A549 (cell line): ENCODE measurements at regions of chr15 and their contacts with region 1.

Region 1: GRCh38 chr15:69058830-69059556 is 44.5 kb downstream of the NOX5 start:
- DNase-seq: peak; percentile 92 to 99
- ATAC-seq: peak; percentile 79 to 92
- H3K4me3 ChIP-seq: no peak overlapping the region
- H3K27ac ChIP-seq: peak overlapping the region; percentile 27 to 63; a peak in 5 of 6 replicates
- H3K4me1 ChIP-seq: peaks cover 26% of the 10 kb centered on the region
- CTCF ChIP-seq: peak; percentile 99
- EP300 ChIP-seq: no peak
- POLR2A ChIP-seq: no peak
- RAD21 ChIP-seq: peak; percentile 99

Region 2: DNA sequence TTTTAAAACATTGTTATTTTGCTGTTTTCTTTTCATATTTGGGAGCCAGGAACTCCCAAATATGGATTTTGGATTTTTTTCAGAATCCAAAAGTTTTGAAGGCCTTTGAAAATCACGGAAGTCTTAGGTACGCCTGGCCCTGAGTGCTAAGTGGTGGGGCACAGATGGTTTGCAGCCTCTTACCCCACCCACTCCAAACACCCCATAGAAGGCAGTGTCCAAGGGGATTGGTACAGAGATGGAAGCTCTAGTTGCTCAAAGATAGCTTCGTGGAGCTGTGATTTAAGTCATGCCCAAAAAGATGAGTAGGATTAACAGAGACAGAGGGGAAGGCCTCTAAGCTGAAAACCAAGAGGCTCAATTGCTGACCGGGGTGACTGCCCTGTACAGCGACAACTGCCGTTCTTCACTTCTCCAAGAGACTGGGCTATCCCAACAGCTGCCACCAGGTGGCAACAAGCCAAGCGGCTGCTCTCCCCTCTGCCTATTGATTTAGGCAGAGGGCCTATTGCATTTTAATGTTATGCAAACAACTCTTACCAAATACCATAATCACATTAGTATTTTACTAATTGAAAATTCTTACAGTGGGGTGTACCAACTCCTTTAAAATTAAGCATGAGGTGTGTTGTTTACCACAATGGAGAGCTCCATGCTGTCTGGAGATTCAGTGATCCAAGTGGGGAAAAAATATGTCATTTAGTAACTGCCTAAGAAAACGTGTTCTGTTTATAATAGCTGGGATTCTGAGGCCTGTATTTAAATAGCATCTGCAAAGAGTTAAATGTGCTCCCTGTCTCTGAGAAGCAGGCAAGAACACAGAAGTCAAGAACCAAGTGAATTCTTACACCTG is 1602.1 kb before region 1 on chr15:
- CTCF ChIA-PET with region 1: no interaction called
- POLR2A ChIA-PET with region 1: no interaction called
- DNase-seq: peak; percentile 75 to 81
- ATAC-seq: peak; percentile 96 to 99
- H3K4me3 ChIP-seq: no peak overlapping the region
- H3K27ac ChIP-seq: no peak overlapping the region
- H3K4me1 ChIP-seq: no peaks in the 10 kb centered on the region
- CTCF ChIP-seq: peak; percentile 94
- EP300 ChIP-seq: no peak
- POLR2A ChIP-seq: no peak
- RAD21 ChIP-seq: peak; percentile 76 to 81

Region 3: GRCh38 chr15:68894208-68894607 is 164.8 kb before region 1 on chr15:
- CTCF ChIA-PET with region 1: no interaction called
- POLR2A ChIA-PET with region 1: no interaction called
- DNase-seq: no peak
- ATAC-seq: 0 out of 6 replicates have a peak, but pooled peaks of 1 of the 2 experiments have one; percentile 30
- H3K4me3 ChIP-seq: no peak overlapping the region
- H3K27ac ChIP-seq: no peak overlapping the region
- H3K4me1 ChIP-seq: no peaks in the 10 kb centered on the region
- CTCF ChIP-seq: no peak
- EP300 ChIP-seq: no peak
- POLR2A ChIP-seq: no peak
- RAD21 ChIP-seq: no peak

Region 4: DNA sequence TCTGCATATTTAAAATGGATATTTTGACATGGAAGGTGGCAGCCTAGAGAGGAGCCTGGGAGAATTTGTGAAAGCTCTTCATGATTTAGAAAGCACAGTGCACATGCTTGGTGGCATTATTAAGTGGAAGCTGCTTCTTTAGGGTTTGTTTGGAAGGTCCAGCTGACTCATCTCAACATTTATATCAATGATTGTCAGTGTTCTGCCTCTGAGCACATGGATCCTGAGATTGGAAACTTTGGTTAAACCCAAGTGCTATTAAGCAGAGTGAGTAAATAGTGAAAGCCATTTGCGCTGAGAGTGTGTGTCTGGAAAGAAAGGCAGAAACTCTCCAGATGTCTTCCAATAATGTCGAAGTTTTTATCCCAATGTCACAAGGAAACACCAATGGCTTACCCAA is 37.1 kb before region 1 on chr15:
- CTCF ChIA-PET with region 1: no interaction called
- POLR2A ChIA-PET with region 1: no interaction called
- DNase-seq: no peak
- ATAC-seq: no peak
- H3K4me3 ChIP-seq: no peak overlapping the region
- H3K27ac ChIP-seq: no peak overlapping the region
- H3K4me1 ChIP-seq: peaks cover 5% of the 10 kb centered on the region; the same call in 1 of the 3 replicates
- CTCF ChIP-seq: no peak
- EP300 ChIP-seq: no peak
- POLR2A ChIP-seq: no peak
- RAD21 ChIP-seq: no peak

Region 5: DNA sequence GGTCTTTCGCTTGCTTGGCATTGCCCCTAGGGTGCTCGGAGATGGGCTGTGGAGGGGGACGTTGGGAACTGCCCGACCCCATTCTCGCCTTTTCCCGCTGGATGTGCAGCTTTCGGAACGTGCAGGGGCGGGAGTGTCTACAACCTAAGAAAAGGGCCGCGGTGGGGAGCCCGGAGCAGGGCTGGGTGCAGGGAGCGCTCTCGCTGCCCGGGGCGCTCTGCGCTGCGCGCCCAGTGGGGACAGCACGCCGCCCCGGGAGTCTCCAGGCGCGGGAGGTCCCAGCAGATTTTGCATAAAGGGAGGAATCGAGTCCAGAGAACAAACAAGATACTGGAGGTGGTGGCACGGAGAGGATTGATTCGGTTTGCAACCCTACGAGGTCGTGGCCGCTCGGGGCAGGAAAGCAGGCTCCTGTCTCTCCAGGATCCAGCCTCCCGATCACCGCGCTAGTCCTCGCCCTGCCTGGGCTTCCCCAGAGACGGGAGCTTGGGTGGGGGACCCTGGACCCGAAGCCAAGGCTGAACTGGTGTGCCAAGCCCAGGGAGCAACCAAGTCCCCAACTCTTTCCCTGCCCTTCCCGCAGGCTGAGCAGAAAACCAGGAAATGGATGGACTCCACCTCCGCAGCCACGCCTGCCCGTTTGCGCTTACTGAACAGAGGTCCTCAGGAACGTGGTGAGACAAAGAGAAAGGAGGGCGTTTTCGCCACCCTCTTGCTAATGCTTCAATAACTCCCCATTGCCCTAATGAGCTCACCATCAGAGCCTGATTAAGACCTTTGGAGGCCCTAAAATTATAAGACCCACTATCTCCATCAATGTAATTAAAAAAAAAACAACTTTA is 15.2 kb after region 1 on chr15:
- CTCF ChIA-PET with region 1: interaction called, 96 read pairs
- POLR2A ChIA-PET with region 1: no interaction called
- DNase-seq: peak; percentile 86
- ATAC-seq: peak; percentile 93 to 96
- H3K4me3 ChIP-seq: peak overlapping the region; percentile 57
- H3K27ac ChIP-seq: peak overlapping the region; percentile 87 to 90
- H3K4me1 ChIP-seq: peaks cover 8% of the 10 kb centered on the region
- CTCF ChIP-seq: 0 out of 3 replicates have a peak, but pooled peaks have one; percentile 5
- EP300 ChIP-seq: no peak
- POLR2A ChIP-seq: peak; percentile 93
- RAD21 ChIP-seq: peak; percentile 12 to 41; a peak in 3 of 5 replicates

Region 6: DNA sequence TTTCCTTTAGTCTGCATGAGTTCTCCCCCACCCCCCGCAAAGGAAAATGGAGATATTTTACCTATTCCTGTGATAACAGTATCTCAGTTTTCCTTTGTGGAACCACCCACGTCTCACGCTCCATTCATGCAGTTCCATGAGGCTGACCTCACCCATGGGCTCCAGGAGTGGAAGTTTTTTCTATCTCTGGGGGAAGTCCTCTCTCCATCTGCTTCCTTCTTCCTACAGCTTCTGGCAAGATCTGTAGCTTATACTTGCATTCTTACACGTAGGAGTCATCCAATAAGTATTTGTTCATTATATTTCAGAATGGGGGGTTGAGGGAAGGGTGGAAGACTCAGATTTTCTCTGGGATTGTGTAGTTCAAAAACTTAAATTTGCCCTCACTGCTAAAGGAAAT is 95.7 kb after region 1 on chr15:
- CTCF ChIA-PET with region 1: interaction called, 36 read pairs
- POLR2A ChIA-PET with region 1: no interaction called
- DNase-seq: no peak
- ATAC-seq: peak in 1 of 2 experiments; percentile 51; a peak in 3 of 6 replicates
- H3K4me3 ChIP-seq: no peak overlapping the region
- H3K27ac ChIP-seq: no peak overlapping the region
- H3K4me1 ChIP-seq: peaks cover 10% of the 10 kb centered on the region
- CTCF ChIP-seq: no peak
- EP300 ChIP-seq: no peak
- POLR2A ChIP-seq: no peak
- RAD21 ChIP-seq: no peak

Region 7: DNA sequence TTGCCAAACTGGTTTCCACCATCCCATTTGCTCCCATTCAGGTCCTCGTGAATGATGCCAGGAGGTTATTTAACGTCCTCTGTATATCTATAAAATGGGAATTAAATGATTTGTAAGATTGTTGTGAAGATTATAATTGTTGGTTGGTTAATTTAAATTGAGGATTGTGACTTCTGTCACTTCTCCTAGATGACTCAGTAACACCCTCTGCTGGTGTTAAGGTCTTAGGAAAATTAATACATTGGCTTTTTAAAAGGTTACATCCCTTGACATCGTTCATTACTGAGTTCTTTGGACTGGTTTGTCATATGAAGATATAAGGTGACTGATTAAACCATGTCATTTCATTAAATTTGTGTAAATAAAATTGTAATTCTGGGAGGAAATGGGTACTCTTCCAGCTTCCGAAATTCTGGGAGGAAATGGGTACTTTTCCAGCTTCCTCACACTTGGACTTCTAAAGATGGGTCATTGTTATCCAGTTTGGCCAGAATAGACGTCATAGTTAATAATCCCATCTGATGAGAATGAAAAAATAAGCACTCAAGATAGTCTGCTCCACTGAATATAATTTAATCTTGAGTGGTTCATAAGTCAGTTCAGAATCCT is 206.5 kb after region 1 on chr15:
- CTCF ChIA-PET with region 1: interaction called, 86 read pairs
- POLR2A ChIA-PET with region 1: no interaction called
- DNase-seq: peak; percentile 36 to 58
- ATAC-seq: peak in 1 of 2 experiments; percentile 59; a peak in 2 of 6 replicates
- H3K4me3 ChIP-seq: no peak overlapping the region
- H3K27ac ChIP-seq: no peak overlapping the region
- H3K4me1 ChIP-seq: no peaks in the 10 kb centered on the region
- CTCF ChIP-seq: peak; percentile 91
- EP300 ChIP-seq: no peak
- POLR2A ChIP-seq: no peak
- RAD21 ChIP-seq: peak; percentile 82 to 83

Region 8: DNA sequence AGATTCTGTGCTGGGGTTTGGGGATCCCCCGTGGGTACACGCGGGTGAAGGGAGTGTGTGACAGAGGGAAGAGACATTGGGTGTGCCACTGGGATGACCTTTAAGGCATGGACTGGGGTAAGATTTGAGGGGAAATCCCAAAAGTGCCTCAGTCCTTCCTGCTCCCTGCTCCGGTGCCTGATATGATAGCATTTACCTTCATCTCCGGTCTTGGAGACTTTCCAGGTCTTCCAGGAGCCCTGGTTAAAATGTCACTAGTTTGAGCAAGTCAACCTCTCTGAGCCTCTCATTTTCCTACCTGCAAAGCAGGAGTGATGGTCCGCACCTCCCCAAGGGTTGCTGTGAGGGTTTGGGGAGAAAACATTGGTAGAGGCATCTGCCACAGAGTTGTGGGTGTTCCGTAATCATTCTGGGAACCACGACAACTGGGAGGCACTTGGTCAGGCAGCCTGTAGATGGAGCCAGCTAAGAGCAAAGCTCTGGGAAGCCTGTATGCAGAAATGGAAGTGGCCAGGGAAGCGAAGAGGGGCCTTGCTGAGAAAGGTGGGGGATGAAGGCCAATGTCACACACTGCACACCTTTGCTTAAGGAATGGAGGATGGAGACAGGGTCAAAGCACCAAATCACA is 321.2 kb after region 1 on chr15:
- CTCF ChIA-PET with region 1: interaction called, 16 read pairs
- POLR2A ChIA-PET with region 1: no interaction called
- DNase-seq: peak in 1 of 2 experiments; percentile 41
- ATAC-seq: peak; percentile 52 to 83; a peak in 4 of 6 replicates
- H3K4me3 ChIP-seq: no peak overlapping the region
- H3K27ac ChIP-seq: no peak overlapping the region
- H3K4me1 ChIP-seq: peaks cover 9% of the 10 kb centered on the region
- CTCF ChIP-seq: peak; percentile 17; the same call in 1 of the 3 replicates
- EP300 ChIP-seq: no peak
- POLR2A ChIP-seq: no peak
- RAD21 ChIP-seq: no peak; a peak in 1 of 5 replicates

Region 9: DNA sequence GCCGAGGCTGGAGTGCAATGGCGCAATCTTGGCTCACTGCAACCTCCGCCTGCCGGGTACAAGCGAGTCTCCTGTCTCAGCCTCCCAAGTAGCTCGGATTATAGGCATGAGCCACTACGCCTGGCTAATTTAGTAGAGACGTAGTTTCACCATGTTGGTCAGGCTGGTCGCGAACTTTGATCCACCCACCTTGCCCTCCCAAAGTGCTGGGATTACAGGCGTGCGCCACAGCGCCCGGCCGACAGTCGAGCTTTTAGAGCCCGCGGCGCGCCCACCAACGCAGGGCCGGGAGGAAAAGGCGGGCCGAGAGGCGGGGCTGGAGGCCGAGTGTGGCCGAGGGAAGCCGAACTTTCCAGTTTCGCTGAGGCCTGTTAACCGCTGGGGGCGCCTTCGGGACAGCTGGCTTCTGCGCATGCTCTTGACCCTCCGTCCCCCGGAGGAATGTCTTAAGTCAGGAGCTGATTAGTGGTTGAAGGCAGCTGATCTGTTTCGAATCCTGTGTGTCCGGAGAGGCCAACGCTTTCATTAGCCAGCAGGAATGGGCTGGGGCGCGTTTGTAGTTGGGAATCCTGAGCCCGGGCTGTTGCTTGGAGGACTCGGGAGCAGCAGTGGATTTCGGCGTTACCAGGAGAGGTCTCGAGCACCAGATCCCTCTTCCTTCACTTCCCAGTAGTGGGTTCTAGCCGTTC is 403.6 kb after region 1 on chr15:
- CTCF ChIA-PET with region 1: interaction called, 54 read pairs
- POLR2A ChIA-PET with region 1: no interaction called
- DNase-seq: peak; percentile 99 to 100
- ATAC-seq: peak; percentile 78 to 88
- H3K4me3 ChIP-seq: peak overlapping the region; percentile 59
- H3K27ac ChIP-seq: peak overlapping the region; percentile 90 to 92
- H3K4me1 ChIP-seq: peaks cover 31% of the 10 kb centered on the region
- CTCF ChIP-seq: peak; percentile 82
- EP300 ChIP-seq: no peak
- POLR2A ChIP-seq: peak; percentile 54
- RAD21 ChIP-seq: no peak